Endothelial cell of umbilical vein (primary cell): ENCODE measurements at regions of chr19 and their contacts with region 1.

Region 1: GRCh38 chr19:6125571-6125989 is 9.9 kb upstream of the ACSBG2 start:
- DNase-seq: peak; percentile 75
- H3K4me3 ChIP-seq: no peak overlapping the region
- H3K27ac ChIP-seq: no peak overlapping the region
- H3K4me1 ChIP-seq: no peaks in the 10 kb centered on the region
- H3K27me3 ChIP-seq: no peaks in the 10 kb centered on the region
- CTCF ChIP-seq: peak; percentile 91 to 95
- POLR2A ChIP-seq: no peak

Region 2: DNA sequence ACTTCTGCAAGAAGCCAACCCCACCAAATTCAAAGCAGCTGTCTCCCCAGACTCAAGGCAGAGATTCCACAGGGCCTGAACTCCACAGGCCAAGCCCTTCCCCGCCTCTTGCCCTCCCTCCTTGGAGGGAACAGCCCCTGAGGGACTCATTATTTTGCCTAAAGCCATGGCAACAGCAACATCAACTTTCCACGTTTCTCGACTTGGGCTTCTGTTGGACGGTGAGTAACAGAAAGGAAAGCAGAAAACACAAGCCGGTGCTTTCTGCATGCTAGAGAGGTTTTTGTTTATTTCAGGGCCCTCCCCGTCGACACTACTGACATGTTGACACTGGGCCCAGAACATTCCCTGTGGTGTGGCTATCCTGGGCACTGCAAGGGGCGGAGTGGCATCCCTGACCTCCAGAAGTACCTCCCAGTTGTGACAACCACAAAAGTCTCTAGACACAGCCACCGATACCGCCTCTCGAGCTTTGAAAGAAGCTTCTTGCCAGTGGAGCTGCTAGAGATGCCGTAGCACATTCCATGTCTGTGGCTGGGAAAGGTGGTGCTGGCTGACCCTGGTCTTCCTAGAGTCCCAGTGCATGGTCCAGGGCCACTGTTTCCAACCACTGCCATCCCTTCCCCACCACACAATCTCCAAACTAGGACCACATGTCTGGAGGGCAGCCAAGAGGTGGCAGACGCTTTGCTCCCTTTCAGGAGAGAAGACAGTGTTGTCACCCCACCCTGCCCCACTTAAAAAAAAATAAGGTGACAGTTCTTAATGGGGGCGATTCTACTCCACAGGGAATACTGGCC is 198.7 kb before region 1 on chr19:
- CTCF ChIA-PET with region 1: no interaction called
- POLR2A ChIA-PET with region 1: no interaction called
- dilution Hi-C with region 1: no loop called
- intact Hi-C with region 1: no loop called
- DNase-seq: no peak
- H3K4me3 ChIP-seq: no peak overlapping the region
- H3K27ac ChIP-seq: no peak overlapping the region
- H3K4me1 ChIP-seq: no peaks in the 10 kb centered on the region
- H3K27me3 ChIP-seq: no peaks in the 10 kb centered on the region
- CTCF ChIP-seq: no peak
- POLR2A ChIP-seq: no peak

Region 3: GRCh38 chr19:6032827-6033226 is 92.8 kb before region 1 on chr19:
- CTCF ChIA-PET with region 1: interaction called, 10 read pairs
- POLR2A ChIA-PET with region 1: no interaction called
- dilution Hi-C with region 1: loop called (anchors 25 kb)
- intact Hi-C with region 1: no loop called
- DNase-seq: no peak
- H3K4me3 ChIP-seq: no peak overlapping the region
- H3K27ac ChIP-seq: no peak overlapping the region
- H3K4me1 ChIP-seq: no peaks in the 10 kb centered on the region
- H3K27me3 ChIP-seq: no peaks in the 10 kb centered on the region
- CTCF ChIP-seq: no peak
- POLR2A ChIP-seq: no peak

Region 4: DNA sequence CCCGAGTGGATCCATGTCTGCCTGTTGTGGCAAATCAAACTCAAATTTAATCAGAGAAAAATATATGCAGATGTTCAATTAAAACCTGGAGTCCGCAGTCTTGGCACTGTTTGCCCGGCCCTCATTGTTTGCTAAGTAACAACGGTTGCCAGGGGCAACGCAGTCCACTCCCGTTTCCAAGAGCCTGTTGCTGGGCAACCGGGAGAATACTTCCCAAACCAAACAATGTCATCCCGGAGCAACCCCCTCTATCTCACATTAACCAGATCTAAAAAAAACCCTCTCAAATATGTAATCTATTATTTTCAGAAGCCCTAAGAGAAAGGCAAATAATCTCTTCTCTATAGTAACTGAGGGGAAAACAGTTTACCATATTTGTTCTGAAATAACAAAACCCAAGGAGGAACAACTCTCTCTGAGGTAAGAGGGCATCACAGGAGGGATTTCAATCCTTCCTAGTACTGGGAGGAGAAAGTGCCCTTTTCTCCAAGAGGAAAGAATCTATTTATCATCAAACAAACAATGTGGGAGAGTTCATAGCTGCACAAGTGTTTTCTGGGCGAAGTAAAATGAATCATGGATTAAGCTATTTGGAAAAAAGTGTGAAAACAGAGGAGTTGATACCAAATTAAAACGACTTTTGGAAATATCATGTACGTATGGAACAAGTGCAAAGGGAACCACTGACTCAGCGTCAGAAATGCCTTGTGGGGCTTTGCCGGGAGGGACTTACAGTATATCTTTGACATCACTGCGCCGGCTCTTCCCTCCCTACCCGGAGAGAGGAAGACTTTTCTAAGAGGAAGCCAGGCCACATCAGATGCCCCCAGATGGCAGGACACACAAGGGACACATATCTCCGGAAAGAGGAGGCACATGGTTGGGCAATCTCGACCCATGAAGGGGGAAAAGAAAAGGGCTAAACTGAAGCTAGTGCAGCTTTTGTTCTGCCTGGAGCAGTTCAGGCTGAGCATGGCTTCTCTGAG is 58.6 kb before region 1 on chr19:
- CTCF ChIA-PET with region 1: interaction called, 30 read pairs
- POLR2A ChIA-PET with region 1: interaction called, 4 read pairs
- dilution Hi-C with region 1: no loop called
- intact Hi-C with region 1: loop called (anchors 1 kb)
- DNase-seq: peak; percentile 99
- H3K4me3 ChIP-seq: no peak overlapping the region
- H3K27ac ChIP-seq: peak overlapping the region; percentile 100
- H3K4me1 ChIP-seq: peaks cover 54% of the 10 kb centered on the region
- H3K27me3 ChIP-seq: no peaks in the 10 kb centered on the region
- CTCF ChIP-seq: no peak
- POLR2A ChIP-seq: no peak

Region 5: DNA sequence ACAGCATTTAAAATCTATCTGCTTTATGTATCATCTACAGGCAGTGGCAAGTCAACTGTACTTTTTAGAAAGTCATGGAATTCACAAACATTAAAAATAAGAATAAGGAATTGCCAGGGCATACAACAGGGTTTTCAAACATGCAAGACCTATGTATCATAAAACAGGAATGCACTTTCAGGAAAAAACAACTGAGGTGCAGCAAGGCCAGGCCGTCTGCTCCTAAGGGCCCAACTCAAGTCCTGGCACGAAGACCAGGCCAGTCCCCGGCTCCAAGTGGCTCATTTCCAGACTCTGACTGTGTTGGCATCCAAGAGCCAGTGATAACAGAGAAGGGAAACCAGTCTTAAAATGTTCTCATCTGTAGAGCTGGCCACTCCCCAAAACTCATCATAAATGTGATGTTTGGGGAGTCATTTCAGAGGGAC is 22.3 kb before region 1 on chr19:
- CTCF ChIA-PET with region 1: interaction called, 12 read pairs
- POLR2A ChIA-PET with region 1: no interaction called
- dilution Hi-C with region 1: no loop called
- intact Hi-C with region 1: no loop called
- DNase-seq: peak; percentile 98
- H3K4me3 ChIP-seq: no peak overlapping the region
- H3K27ac ChIP-seq: peak overlapping the region; percentile 76
- H3K4me1 ChIP-seq: peaks cover 50% of the 10 kb centered on the region
- H3K27me3 ChIP-seq: no peaks in the 10 kb centered on the region
- CTCF ChIP-seq: no peak
- POLR2A ChIP-seq: peak; percentile 77

Region 6: DNA sequence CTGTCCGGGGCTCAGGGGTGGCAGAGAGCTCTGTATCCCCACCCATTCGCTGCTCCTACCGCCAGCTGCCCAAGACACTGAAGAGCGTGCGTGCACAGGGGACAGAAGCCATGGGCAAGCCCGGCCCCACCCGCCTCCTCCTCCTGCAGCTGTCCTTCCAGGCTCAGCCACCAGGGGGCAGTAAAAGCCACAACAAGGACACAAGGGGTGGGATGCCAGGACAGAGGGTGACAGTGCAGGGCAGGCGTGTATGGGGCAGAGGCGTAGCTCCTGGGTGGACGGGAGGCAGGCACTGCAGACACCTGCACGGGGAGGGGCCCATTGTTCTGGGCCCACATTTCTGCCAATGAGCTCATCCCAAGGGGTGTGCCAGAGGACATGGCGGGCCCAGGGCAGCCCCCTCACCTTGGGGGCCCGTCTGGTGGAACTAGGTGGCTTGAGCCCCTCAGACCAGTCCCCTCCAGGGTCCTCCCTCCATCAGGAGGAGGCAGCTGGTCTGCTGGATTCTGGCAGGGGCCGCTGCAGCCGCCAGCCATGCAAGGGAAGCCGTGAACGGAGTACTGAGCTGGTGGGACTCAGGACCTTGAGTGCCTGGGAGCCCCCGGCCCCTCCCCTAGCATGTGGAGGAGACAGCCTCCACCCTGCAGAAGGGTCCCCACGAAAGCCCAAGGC is 93.0 kb after region 1 on chr19:
- CTCF ChIA-PET with region 1: interaction called, 15 read pairs
- POLR2A ChIA-PET with region 1: no interaction called
- dilution Hi-C with region 1: no loop called
- intact Hi-C with region 1: no loop called
- DNase-seq: peak; percentile 79
- H3K4me3 ChIP-seq: no peak overlapping the region
- H3K27ac ChIP-seq: peak overlapping the region; percentile 81
- H3K4me1 ChIP-seq: peaks cover 22% of the 10 kb centered on the region
- H3K27me3 ChIP-seq: no peaks in the 10 kb centered on the region
- CTCF ChIP-seq: peak; percentile 87 to 91
- POLR2A ChIP-seq: no peak

Region 7: DNA sequence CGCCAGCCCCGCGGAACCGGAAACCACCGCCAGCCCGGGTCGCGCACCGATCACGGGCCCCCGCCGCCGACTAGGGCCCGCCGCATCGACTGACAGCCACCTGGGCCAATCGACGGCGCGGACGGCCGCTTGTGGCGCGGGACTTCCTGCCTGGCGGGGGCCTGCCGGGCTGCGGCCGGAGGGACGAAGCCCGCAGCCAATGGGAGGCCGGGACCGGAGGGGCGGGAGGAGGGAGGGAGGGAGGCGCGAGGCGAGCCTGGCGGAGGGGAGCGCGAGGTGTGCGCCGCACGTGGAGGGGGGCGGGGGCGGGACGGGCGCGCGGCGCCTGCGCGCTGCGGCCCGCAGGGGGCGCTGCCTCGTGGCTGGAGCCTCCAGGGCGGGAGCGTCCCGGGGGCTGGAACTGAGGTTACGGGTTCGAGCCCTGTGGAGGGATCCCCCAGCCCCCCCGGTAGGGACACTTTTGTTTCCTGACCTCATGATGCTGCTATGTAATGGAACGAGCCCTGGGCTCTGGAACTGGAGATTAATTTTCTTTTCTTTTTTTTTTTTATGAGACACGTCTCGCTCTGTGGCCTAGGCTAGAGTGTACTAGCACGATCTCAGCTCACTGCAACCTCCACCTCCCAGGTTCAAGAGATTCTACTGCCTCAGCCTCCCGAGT is 154.5 kb after region 1 on chr19 and contains the start of gene MLLT1:
- CTCF ChIA-PET with region 1: no interaction called
- POLR2A ChIA-PET with region 1: no interaction called
- dilution Hi-C with region 1: no loop called
- intact Hi-C with region 1: no loop called
- DNase-seq: peak; percentile 96
- H3K4me3 ChIP-seq: peak within 1 kb of the TSS; percentile 70 to 90 (median 82)
- H3K27ac ChIP-seq: peak within 1 kb of the TSS; percentile 73
- H3K4me1 ChIP-seq: peaks cover 39% of the 10 kb centered on the region
- H3K27me3 ChIP-seq: no peaks in the 10 kb centered on the region
- CTCF ChIP-seq: peak; percentile 37 to 71
- POLR2A ChIP-seq: no peak
- total RNA-seq, gene MLLT1: 79.2 and 84.8 TPM in 2 replicates

Region 8: GRCh38 chr19:6516659-6517291 is 391.2 kb after region 1 on chr19:
- CTCF ChIA-PET with region 1: no interaction called
- POLR2A ChIA-PET with region 1: no interaction called
- dilution Hi-C with region 1: no loop called
- intact Hi-C with region 1: loop called (anchors 1 kb)
- DNase-seq: peak; percentile 74
- H3K4me3 ChIP-seq: peak overlapping the region; percentile 14 to 53 (median 41)
- H3K27ac ChIP-seq: peak overlapping the region; percentile 14
- H3K4me1 ChIP-seq: peaks cover 4% of the 10 kb centered on the region
- H3K27me3 ChIP-seq: no peaks in the 10 kb centered on the region
- CTCF ChIP-seq: peak; percentile 97
- POLR2A ChIP-seq: no peak